ENCODE measurements at regions of chr2 and their contacts with region 1.

Region 1: DNA sequence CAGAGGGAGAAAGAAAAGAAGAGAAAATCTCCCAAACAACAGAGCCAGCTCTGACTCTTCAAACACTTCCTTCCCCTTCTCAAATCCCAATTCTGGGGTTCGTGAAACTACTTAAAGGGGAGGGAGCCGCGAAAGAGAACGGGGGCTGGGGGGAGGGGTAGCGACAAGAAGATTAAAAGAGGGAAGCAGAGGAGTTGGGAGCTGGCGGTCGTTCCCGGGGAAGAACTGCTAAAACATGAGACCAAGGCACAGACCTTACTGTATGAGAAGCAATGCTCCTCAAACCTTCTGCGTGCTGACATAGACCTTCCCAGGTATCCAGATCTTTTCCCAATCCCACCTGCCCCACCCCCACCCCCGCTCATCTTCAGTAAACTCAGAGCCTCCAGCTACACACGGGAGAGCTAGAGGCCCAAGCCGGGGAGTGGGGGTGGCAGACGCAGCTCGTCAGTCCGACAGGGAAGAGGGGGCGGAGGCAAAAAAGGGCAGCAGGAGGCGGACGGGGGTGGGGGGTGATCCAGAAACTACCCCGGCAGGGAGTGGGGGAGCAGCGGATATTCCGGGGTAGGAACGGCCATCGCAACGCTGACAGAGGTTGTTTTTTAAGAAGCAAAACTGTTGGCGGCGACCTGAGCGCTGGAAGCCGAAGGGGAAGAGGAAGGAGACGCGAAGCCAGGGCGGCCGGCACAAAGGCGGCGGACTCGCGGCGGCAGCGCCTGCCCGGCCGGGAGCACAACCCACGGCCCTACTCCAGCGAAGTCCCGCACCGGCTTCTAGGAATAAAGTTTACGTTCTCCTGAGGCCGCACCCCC is 1.0 kb downstream of the BAZ2B start:
- H3K4me3 Mint-ChIP-seq: peak overlapping the region; percentile 91
- H3K27ac Mint-ChIP-seq: peak overlapping the region; percentile 100
- H3K4me1 Mint-ChIP-seq: peaks cover 32% of the 10 kb centered on the region
- H3K27me3 Mint-ChIP-seq: no peaks in the 10 kb centered on the region

Region 2: DNA sequence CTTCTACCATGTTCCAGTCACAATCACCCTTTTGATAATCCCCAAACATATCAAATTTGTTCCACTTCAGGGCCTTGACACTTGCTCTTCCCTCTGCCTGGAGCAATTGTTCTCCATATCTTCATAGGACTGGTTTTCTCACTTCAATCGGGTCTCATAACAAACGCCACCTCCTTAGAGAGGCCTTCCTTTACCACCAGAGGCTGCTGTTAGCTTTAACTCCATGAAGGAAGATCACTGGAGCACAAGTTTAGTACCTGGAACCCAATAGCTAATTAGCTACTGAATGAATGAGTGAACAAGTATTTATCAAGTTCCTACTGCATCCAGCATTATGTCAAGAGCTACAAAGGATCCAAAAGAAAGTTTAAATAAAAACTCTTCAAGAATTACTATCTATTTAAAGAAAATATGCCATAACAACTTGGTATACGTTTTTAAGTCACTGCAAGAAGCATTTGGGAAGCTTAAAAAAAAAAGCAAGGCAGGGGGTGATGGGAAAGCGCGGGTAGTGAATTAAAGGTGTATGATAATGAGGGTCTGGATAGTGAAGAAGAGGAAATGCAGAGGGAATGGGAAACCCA is 57.8 kb before region 1 on chr2:
- intact Hi-C with region 1: loop called (anchors 10 kb)
- H3K4me3 Mint-ChIP-seq: no peak overlapping the region
- H3K27ac Mint-ChIP-seq: peak overlapping the region; percentile 51
- H3K4me1 Mint-ChIP-seq: peaks cover 32% of the 10 kb centered on the region
- H3K27me3 Mint-ChIP-seq: no peaks in the 10 kb centered on the region

Region 3: DNA sequence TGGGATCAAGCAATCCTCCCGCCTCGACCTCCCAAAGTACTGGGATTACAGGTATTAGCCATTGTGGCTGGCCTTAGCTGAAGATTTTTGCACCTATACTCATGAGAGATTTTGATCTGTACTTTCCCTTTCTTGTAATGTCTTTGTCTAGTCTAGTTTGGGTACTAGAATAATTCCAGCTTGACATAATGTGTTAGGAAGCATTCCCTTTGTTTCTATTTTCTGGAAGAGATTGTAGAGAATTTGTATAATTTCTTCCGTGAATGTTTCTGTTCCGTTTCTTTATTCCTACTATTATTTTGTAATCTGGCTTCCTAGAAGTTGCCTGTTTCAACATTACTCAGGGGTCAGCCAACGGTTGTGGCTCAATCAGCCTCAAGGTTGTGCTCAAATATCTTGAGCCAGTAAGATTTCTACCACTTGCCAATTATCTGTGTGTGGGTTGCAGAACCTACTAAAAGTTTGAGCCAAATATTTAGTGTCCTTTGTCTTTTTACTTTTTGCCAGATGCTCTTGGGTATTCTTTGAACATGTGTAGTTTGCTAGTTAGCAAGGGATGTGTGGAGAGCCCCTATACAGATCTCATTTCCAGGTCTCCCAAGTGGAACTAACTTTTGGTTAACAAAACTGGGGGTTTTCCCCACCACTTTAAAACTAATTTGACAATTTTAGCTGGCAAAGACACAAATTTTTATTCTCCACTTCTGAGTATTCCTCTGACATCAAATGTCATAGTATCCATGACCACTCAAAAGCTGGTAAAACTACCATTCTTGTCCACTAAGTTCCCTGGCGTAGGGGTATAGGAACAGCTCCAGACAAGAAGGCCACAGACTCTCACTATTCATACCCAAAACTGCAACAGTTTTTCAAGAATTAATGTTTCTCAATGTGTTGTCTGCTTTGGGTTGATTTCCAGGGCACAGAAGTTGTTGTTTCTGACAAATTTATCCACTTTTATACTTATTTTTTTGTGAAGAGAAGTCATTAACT is 43.8 kb after region 1 on chr2:
- intact Hi-C with region 1: loop called (anchors 1 kb)
- H3K4me3 Mint-ChIP-seq: no peak overlapping the region
- H3K27ac Mint-ChIP-seq: peak overlapping the region; percentile 71
- H3K4me1 Mint-ChIP-seq: peaks cover 31% of the 10 kb centered on the region
- H3K27me3 Mint-ChIP-seq: no peaks in the 10 kb centered on the region

Region 4: GRCh38 chr2:159712143-159712928 is 97.0 kb after region 1 on chr2 and contains the start of gene MARCHF7:
- intact Hi-C with region 1: loop called (anchors 2 kb)
- H3K4me3 Mint-ChIP-seq: peak within 1 kb of the TSS; percentile 94
- H3K27ac Mint-ChIP-seq: peak within 1 kb of the TSS; percentile 99
- H3K4me1 Mint-ChIP-seq: peaks cover 30% of the 10 kb centered on the region
- H3K27me3 Mint-ChIP-seq: no peaks in the 10 kb centered on the region